ENCODE measurements at regions of chr11 and their contacts with region 1.

Region 1: GRCh38 chr11:121367001-121367843 is 74.7 kb downstream of the SC5D start:
- DNase-seq: peak; percentile 99
- ATAC-seq: peak; percentile 96
- H3K4me3 ChIP-seq: 0 out of 2 replicates have a peak overlapping the region, but pooled peaks have one; percentile 24
- H3K27ac ChIP-seq: peak overlapping the region; percentile 85
- H3K4me1 ChIP-seq: peaks cover 43% of the 10 kb centered on the region
- H3K27me3 ChIP-seq: no peaks in the 10 kb centered on the region
- CTCF ChIP-seq: no peak
- EP300 ChIP-seq: peak in 1 of 2 experiments; percentile 42; a peak in 1 of 4 replicates
- POLR2A ChIP-seq: no peak
- RAD21 ChIP-seq: no peak

Region 2: GRCh38 chr11:121141066-121141465 is 226.2 kb before region 1 on chr11:
- CTCF ChIA-PET with region 1: no interaction called
- POLR2A ChIA-PET with region 1: no interaction called
- RAD21 ChIA-PET with region 1: no interaction called
- SMC1A ChIA-PET with region 1: no interaction called
- in situ Hi-C with region 1: no loop called
- intact Hi-C with region 1: no loop called
- DNase-seq: no peak
- ATAC-seq: no peak
- H3K4me3 ChIP-seq: no peak overlapping the region
- H3K27ac ChIP-seq: no peak overlapping the region
- H3K4me1 ChIP-seq: no peaks in the 10 kb centered on the region
- H3K27me3 ChIP-seq: peaks cover 4 to 9% of the 10 kb centered on the region in 2 experiments; a peak in 3 of 4 replicates
- CTCF ChIP-seq: no peak
- EP300 ChIP-seq: no peak
- POLR2A ChIP-seq: no peak
- RAD21 ChIP-seq: no peak

Region 3: DNA sequence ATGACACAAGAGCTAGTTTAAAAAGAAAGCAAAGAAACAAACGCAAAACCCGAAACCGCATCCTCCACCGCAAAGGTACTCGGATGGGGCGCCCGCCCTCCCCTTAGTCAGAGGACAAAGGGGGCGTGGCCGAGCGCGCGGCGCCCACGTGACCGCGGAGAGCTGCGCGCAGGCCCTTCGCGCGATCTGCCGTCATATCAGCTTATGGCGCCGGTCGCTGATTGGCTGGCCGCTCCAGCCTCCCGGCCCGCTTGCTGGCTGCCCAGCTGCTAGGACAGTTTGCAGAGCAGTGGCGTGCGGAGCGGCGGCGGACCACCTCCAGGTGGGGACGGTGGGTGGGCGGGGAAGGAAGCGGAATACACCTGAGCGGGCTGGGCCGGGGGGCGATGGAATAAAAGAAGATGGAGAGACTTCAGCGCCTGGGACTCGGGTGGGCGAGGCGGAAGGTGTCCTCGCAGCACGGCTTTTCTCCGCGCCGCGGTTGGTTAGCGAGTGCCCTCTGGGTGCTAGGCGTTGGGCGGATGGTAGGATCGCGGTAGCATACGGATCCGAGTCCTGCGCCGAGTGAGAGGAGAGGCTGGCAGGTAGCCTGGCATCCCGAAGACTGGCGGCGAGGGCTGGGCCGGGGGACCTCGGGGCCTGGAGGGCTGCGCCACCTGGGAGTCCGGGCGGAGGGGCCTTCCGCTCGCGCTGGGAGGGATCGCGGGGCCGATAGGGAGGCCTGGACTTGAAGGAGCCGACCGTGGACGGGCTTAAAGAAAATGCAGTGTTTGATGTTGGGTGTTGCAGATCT is 74.5 kb before region 1 on chr11 and contains the start of gene SC5D:
- CTCF ChIA-PET with region 1: no interaction called
- POLR2A ChIA-PET with region 1: no interaction called
- RAD21 ChIA-PET with region 1: interaction called, 6 read pairs
- SMC1A ChIA-PET with region 1: interaction called, 12 read pairs
- in situ Hi-C with region 1: no loop called
- intact Hi-C with region 1: no loop called
- DNase-seq: peak; percentile 80
- ATAC-seq: peak; percentile 98
- H3K4me3 ChIP-seq: peak within 1 kb of the TSS; percentile 88
- H3K27ac ChIP-seq: peak within 1 kb of the TSS; percentile 88
- H3K4me1 ChIP-seq: no peaks in the 10 kb centered on the region
- H3K27me3 ChIP-seq: no peaks in the 10 kb centered on the region
- CTCF ChIP-seq: no peak
- EP300 ChIP-seq: peak in 1 of 2 experiments; percentile 5; a peak in 2 of 4 replicates
- POLR2A ChIP-seq: peak; percentile 96
- RAD21 ChIP-seq: no peak
- polyA plus RNA-seq, gene SC5D: 26.5 to 31.7 TPM

Region 4: DNA sequence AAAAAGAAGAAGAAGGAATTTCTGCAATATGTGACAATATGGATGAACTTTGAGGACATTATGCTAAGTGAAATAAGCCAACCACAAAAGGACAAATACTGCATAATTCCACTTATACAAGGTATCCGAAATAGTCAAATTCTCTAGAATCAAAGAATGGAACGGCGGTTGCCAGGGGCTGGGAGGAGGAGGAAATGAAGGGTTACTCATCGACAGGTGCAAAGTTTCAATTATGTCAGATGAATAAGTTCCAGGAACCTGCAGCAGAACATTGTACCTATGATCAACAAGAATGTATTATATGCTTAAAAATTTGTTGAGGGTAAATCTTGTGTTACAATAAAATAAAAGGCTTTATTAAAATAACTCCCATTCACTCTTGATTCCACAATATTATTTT is 25.6 kb before region 1 on chr11:
- CTCF ChIA-PET with region 1: interaction called, 26 read pairs
- POLR2A ChIA-PET with region 1: interaction called, 70 read pairs
- RAD21 ChIA-PET with region 1: interaction called, 92 read pairs
- SMC1A ChIA-PET with region 1: interaction called, 338 read pairs
- in situ Hi-C with region 1: no loop called
- intact Hi-C with region 1: loop called (anchors 2 kb)
- DNase-seq: no peak
- ATAC-seq: peak; percentile 56
- H3K4me3 ChIP-seq: no peak overlapping the region
- H3K27ac ChIP-seq: peak overlapping the region; percentile 70
- H3K4me1 ChIP-seq: peaks cover 53% of the 10 kb centered on the region
- H3K27me3 ChIP-seq: no peaks in the 10 kb centered on the region
- CTCF ChIP-seq: no peak
- EP300 ChIP-seq: no peak
- POLR2A ChIP-seq: no peak
- RAD21 ChIP-seq: no peak

Region 5: DNA sequence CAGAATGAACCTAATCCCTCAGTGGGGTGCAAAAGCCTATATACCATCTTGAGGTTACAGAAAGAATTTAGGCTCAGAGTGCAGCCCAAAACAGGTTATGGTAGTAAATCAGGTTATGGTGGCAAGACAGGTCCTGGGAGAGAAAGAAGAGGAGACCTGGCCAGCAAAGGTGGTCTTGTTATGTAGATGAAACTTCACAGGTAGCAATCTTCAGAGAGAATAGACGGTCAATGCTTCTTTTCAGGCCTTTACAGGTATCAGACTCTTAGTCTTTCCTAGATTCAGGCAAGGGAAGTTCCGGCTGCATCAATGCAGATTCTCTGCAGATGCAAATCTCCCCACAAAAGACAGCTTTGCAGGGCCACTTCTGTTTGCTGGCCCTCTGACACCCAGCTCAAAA is 39.1 kb after region 1 on chr11:
- CTCF ChIA-PET with region 1: interaction called, 5 read pairs
- POLR2A ChIA-PET with region 1: interaction called, 4 read pairs
- RAD21 ChIA-PET with region 1: interaction called, 5 read pairs
- SMC1A ChIA-PET with region 1: interaction called, 11 read pairs
- in situ Hi-C with region 1: no loop called
- intact Hi-C with region 1: no loop called
- DNase-seq: no peak
- ATAC-seq: peak; percentile 26; the same call in 2 of the 3 replicates
- H3K4me3 ChIP-seq: no peak overlapping the region
- H3K27ac ChIP-seq: no peak overlapping the region
- H3K4me1 ChIP-seq: peaks cover 5% of the 10 kb centered on the region; the same call in 1 of the 2 replicates
- H3K27me3 ChIP-seq: no peaks in the 10 kb centered on the region
- CTCF ChIP-seq: no peak
- EP300 ChIP-seq: no peak
- POLR2A ChIP-seq: no peak
- RAD21 ChIP-seq: no peak

Region 6: GRCh38 chr11:121446752-121447156 is 79.5 kb after region 1 on chr11:
- CTCF ChIA-PET with region 1: interaction called, 12 read pairs
- POLR2A ChIA-PET with region 1: interaction called, 25 read pairs
- RAD21 ChIA-PET with region 1: interaction called, 42 read pairs
- SMC1A ChIA-PET with region 1: interaction called, 101 read pairs
- in situ Hi-C with region 1: no loop called
- intact Hi-C with region 1: loop called (anchors 2 kb)
- DNase-seq: no peak
- ATAC-seq: peak; percentile 42
- H3K4me3 ChIP-seq: no peak overlapping the region
- H3K27ac ChIP-seq: peak overlapping the region; percentile 76
- H3K4me1 ChIP-seq: peaks cover 59% of the 10 kb centered on the region
- H3K27me3 ChIP-seq: no peaks in the 10 kb centered on the region
- CTCF ChIP-seq: peak in 2 of 3 experiments; percentile 19 to 37; a peak in 4 of 6 replicates
- EP300 ChIP-seq: no peak
- POLR2A ChIP-seq: no peak
- RAD21 ChIP-seq: peak; percentile 48

Region 7: GRCh38 chr11:121575250-121575962 is 208.2 kb after region 1 on chr11:
- CTCF ChIA-PET with region 1: interaction called, 3 read pairs
- POLR2A ChIA-PET with region 1: interaction called, 5 read pairs
- RAD21 ChIA-PET with region 1: interaction called, 8 read pairs
- SMC1A ChIA-PET with region 1: interaction called, 10 read pairs
- in situ Hi-C with region 1: no loop called
- intact Hi-C with region 1: no loop called
- DNase-seq: peak; percentile 74
- ATAC-seq: peak; percentile 93
- H3K4me3 ChIP-seq: no peak overlapping the region
- H3K27ac ChIP-seq: peak overlapping the region; percentile 75
- H3K4me1 ChIP-seq: peaks cover 56% of the 10 kb centered on the region
- H3K27me3 ChIP-seq: no peaks in the 10 kb centered on the region
- CTCF ChIP-seq: no peak
- EP300 ChIP-seq: peak; percentile 86 to 91
- POLR2A ChIP-seq: no peak; the same call in 1 of the 2 replicates
- RAD21 ChIP-seq: no peak